Astrocyte of the cerebellum (primary cell): ENCODE measurements at regions of chr3 and their contacts with region 1.

Region 1: GRCh38 chr3:184656829-184657681 is 54.8 kb downstream of the MAGEF1 start:
- DNase-seq: peak; percentile 23
- H3K4me3 ChIP-seq: no peak overlapping the region
- CTCF ChIP-seq: no peak

Region 2: GRCh38 chr3:184734903-184735701 is 78.0 kb after region 1 on chr3:
- in situ Hi-C with region 1: loop called (anchors 5 kb)
- DNase-seq: no peak
- H3K4me3 ChIP-seq: no peak overlapping the region
- CTCF ChIP-seq: no peak